Endothelial cell of umbilical vein (primary cell): ENCODE measurements at regions of chr18 and their contacts with region 1.

Region 1: GRCh38 chr18:39571511-39571910 is 2005.9 kb upstream of the CELF4 start:
- DNase-seq: peak; percentile 39
- H3K4me3 ChIP-seq: no peak overlapping the region
- H3K27ac ChIP-seq: no peak overlapping the region
- H3K4me1 ChIP-seq: no peaks in the 10 kb centered on the region
- H3K27me3 ChIP-seq: no peaks in the 10 kb centered on the region
- CTCF ChIP-seq: peak; percentile 19 to 28
- POLR2A ChIP-seq: no peak

Region 2: DNA sequence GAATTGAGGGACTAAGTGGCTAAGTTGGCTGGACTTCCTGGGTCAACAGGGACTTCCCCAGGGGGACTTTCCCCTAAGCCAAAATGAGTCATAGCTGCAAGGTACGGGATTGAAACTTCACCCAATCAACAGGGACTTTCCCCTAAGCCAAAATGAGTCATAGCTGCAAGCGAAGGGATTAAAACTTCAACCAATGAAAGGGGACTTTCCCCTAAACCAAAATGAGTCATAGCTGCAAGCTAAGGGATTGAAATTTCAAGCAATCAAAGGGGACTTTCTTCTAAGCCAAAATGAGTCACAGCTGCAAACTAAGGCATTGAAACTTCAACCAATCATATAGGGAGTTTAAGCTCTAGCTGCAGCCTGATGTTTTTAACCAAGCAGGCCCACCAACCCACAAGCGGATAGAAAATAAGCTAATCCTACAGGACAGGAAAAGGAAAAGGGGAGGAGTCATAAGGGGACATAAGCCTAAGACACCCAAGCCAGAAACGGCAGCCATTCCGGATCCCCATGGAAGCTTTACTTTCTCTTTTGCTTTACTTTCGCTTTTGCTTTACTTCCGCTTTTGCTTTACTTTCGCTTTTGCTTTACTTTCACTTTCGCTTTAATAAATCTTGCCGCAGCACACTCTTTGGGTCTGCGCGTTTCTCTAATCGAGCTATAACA is 630.5 kb before region 1 on chr18:
- CTCF ChIA-PET with region 1: no interaction called
- POLR2A ChIA-PET with region 1: no interaction called
- dilution Hi-C with region 1: no loop called
- intact Hi-C with region 1: no loop called
- DNase-seq: peak; percentile 11
- H3K4me3 ChIP-seq: no peak overlapping the region
- H3K27ac ChIP-seq: no peak overlapping the region
- H3K4me1 ChIP-seq: no peaks in the 10 kb centered on the region
- H3K27me3 ChIP-seq: no peaks in the 10 kb centered on the region
- CTCF ChIP-seq: no peak
- POLR2A ChIP-seq: no peak

Region 3: GRCh38 chr18:39205565-39206195 is 365.8 kb before region 1 on chr18:
- CTCF ChIA-PET with region 1: interaction called, 3 read pairs
- POLR2A ChIA-PET with region 1: no interaction called
- dilution Hi-C with region 1: no loop called
- intact Hi-C with region 1: loop called (anchors 10 kb)
- DNase-seq: no peak
- H3K4me3 ChIP-seq: no peak overlapping the region
- H3K27ac ChIP-seq: no peak overlapping the region
- H3K4me1 ChIP-seq: no peaks in the 10 kb centered on the region
- H3K27me3 ChIP-seq: no peaks in the 10 kb centered on the region
- CTCF ChIP-seq: no peak
- POLR2A ChIP-seq: no peak

Region 4: DNA sequence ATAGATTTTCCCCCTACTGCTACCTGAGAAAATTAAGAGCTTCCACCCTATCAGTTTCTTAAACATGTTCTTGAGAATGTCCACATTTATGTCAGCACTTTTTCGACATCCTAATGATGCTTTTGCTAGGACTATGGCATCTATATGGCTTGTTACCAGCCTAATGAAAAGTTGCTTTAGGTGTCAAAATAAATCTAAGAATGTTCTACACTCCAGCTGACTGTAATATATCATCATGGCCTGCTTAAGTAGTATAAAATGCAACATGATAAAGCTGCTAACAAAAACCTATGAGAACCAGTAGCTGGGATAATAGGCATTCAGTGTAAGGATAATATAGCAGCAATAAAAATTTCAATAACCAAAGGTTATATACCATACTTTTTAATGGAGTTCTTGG is 22.4 kb before region 1 on chr18:
- CTCF ChIA-PET with region 1: no interaction called
- POLR2A ChIA-PET with region 1: no interaction called
- dilution Hi-C with region 1: no loop called
- intact Hi-C with region 1: no loop called
- DNase-seq: no peak
- H3K4me3 ChIP-seq: no peak overlapping the region
- H3K27ac ChIP-seq: no peak overlapping the region
- H3K4me1 ChIP-seq: peaks cover 2% of the 10 kb centered on the region
- H3K27me3 ChIP-seq: no peaks in the 10 kb centered on the region
- CTCF ChIP-seq: no peak
- POLR2A ChIP-seq: no peak

Region 5: DNA sequence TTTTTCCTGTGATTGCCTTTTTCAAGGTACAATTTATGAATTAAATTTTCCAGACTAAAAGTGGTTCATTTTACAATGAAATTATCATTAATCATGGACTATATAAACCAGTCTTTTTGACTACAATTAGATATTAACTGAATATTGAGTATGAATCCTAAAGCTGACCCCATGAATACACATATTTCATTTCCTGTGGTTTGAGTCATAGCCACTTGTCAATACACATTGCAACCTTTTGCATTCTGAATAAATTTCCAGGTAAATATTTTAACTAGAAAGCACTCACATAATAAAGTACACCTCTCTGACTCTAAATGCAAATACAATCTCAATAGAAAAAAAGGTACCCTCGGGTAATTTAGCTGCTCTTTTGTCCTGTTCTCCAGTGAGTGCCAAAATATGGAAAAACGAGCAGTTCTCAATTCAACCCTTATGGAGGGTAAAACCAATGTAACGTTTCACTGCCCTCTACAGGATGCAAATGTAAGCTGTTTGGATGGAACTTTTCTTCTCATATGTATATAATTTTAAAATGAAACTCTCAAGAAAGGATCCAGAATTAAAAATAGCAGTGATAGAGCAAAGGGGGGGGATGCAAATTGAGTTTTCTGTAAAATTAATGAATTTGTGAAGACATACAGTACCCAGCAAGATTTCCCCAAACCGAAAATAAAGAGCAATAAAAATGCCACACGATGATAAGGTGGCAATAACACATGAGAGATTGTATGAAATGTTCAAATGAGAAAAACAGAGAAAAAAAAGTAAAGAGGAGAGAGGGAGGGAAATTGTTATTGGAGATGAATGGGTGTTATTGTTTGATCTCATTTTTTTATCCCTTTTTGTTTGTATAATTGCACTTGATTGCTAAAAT is 587.9 kb after region 1 on chr18:
- CTCF ChIA-PET with region 1: interaction called, 11 read pairs
- POLR2A ChIA-PET with region 1: no interaction called
- dilution Hi-C with region 1: no loop called
- intact Hi-C with region 1: loop called (anchors 2 kb)
- DNase-seq: peak; percentile 63
- H3K4me3 ChIP-seq: no peak overlapping the region
- H3K27ac ChIP-seq: no peak overlapping the region
- H3K4me1 ChIP-seq: peaks cover 6% of the 10 kb centered on the region
- H3K27me3 ChIP-seq: no peaks in the 10 kb centered on the region
- CTCF ChIP-seq: peak; percentile 44 to 63
- POLR2A ChIP-seq: no peak